Calu3 (cell line): ENCODE measurements at regions of chr14 and their contacts with region 1.

Region 1: DNA sequence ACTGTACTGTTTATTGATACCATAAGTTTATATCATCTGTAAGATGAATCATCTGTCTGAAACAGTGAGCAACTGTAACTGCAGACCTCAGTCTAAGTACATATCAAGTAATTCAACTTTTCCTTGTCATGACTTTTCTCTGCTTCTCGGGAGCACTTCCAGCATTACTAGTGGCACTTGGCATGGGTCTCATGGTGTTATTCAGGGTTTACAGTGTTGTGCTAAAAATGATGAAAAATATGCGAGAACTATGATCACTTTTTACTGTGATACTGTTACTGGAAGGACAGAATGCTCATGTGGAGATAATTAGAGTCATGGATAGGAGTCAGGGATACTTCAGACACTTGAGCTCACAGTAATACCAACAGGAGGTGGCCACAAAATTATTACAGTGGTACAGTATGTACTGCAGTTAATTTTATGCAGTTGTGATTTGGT is 8.3 kb downstream of the KTN1 start:
- DNase-seq: no peak
- H3K4me3 Mint-ChIP-seq: peak overlapping the region; percentile 48
- H3K27ac Mint-ChIP-seq: no peak overlapping the region
- H3K4me1 Mint-ChIP-seq: peaks cover 49% of the 10 kb centered on the region
- H3K27me3 Mint-ChIP-seq: no peaks in the 10 kb centered on the region
- CTCF ChIP-seq: no peak

Region 2: GRCh38 chr14:55530464-55530863 is 57.8 kb before region 1 on chr14:
- CTCF ChIA-PET with region 1: no interaction called
- intact Hi-C with region 1: loop called (anchors 2 kb)
- DNase-seq: no peak
- H3K4me3 Mint-ChIP-seq: no peak overlapping the region
- H3K27ac Mint-ChIP-seq: no peak overlapping the region
- H3K4me1 Mint-ChIP-seq: peaks cover 9% of the 10 kb centered on the region
- H3K27me3 Mint-ChIP-seq: no peaks in the 10 kb centered on the region
- CTCF ChIP-seq: no peak

Region 3: GRCh38 chr14:55540847-55541766 is 47.2 kb before region 1 on chr14:
- CTCF ChIA-PET with region 1: no interaction called
- intact Hi-C with region 1: no loop called
- DNase-seq: no peak
- H3K4me3 Mint-ChIP-seq: peak overlapping the region; percentile 26
- H3K27ac Mint-ChIP-seq: peak overlapping the region; percentile 38
- H3K4me1 Mint-ChIP-seq: peaks cover 36% of the 10 kb centered on the region
- H3K27me3 Mint-ChIP-seq: no peaks in the 10 kb centered on the region
- CTCF ChIP-seq: no peak

Region 4: GRCh38 chr14:55620277-55620676 is 32.0 kb after region 1 on chr14:
- CTCF ChIA-PET with region 1: no interaction called
- intact Hi-C with region 1: loop called (anchors 1 kb)
- DNase-seq: no peak
- H3K4me3 Mint-ChIP-seq: no peak overlapping the region
- H3K27ac Mint-ChIP-seq: no peak overlapping the region
- H3K4me1 Mint-ChIP-seq: peaks cover 21% of the 10 kb centered on the region
- H3K27me3 Mint-ChIP-seq: no peaks in the 10 kb centered on the region
- CTCF ChIP-seq: no peak